Activated T-helper 2 cell treated with anti-CD3 and anti-CD28 coated beads, Interferon-gamma antibody, Interleukin-2, Interleukin-4, amounts not matched to agents 10 μg/mL and 5 μg/mL and 100 μg/mL, durations not matched to agents 14 hours and 24 hours and 36 hours (primary cell): ENCODE measurements at regions of chr22 and their contacts with region 1.

Region 1: GRCh38 chr22:36387752-36388518 is at the start of gene MYH9:
- DNase-seq: peak; percentile 100
- H3K4me3 Mint-ChIP-seq: peak within 1 kb of the TSS; percentile 98
- H3K27ac Mint-ChIP-seq: peak within 1 kb of the TSS; percentile 98
- H3K4me1 Mint-ChIP-seq: peaks cover 36% of the 10 kb centered on the region
- H3K27me3 Mint-ChIP-seq: no peaks in the 10 kb centered on the region
- total RNA-seq, gene MYH9: 619 and 645 TPM in 2 replicates

Region 2: DNA sequence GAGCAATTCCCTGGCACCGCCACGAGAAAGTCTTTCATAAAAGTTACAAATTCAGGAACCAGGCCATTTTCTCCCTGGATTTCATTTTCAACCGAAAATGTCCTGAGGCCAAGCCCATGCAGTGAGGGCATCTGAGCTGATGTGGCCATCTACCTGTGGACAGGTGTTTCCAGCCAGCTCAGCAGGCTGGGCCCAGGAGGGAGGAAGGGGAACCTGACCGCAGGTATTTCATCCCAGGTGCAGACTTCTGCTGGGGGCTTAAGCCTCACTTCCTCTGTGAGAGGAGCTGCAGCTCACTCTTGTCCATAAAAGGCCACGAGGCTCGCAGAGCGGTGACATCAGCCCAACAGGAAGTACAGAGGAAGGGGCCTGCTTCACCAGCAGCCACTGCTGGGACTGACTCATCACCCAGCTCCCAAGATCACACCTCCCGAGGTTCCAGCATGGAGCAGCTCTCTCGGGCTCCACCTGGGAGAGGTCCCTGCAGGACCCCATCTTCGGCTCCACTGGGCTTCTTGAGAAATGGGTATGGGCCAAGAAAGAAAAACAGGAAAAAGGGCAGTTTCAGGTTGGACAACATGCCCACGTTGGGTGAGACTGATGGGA is 56.5 kb before region 1 on chr22:
- intact Hi-C with region 1: loop called (anchors 1 kb)
- DNase-seq: peak; percentile 80
- H3K4me3 Mint-ChIP-seq: peak overlapping the region; percentile 90
- H3K27ac Mint-ChIP-seq: peak overlapping the region; percentile 99
- H3K4me1 Mint-ChIP-seq: peaks cover 88% of the 10 kb centered on the region
- H3K27me3 Mint-ChIP-seq: no peaks in the 10 kb centered on the region

Region 3: GRCh38 chr22:36365020-36365411 is 22.9 kb before region 1 on chr22:
- intact Hi-C with region 1: loop called (anchors 2 kb)
- DNase-seq: peak; percentile 80
- H3K4me3 Mint-ChIP-seq: peak overlapping the region; percentile 44
- H3K27ac Mint-ChIP-seq: peak overlapping the region; percentile 93
- H3K4me1 Mint-ChIP-seq: peaks cover 80% of the 10 kb centered on the region
- H3K27me3 Mint-ChIP-seq: no peaks in the 10 kb centered on the region

Region 4: GRCh38 chr22:36377022-36377631 is 10.8 kb before region 1 on chr22:
- intact Hi-C with region 1: loop called (anchors 1 kb)
- DNase-seq: peak; percentile 48
- H3K4me3 Mint-ChIP-seq: peak overlapping the region; percentile 81
- H3K27ac Mint-ChIP-seq: peak overlapping the region; percentile 97
- H3K4me1 Mint-ChIP-seq: peaks cover 85% of the 10 kb centered on the region
- H3K27me3 Mint-ChIP-seq: no peaks in the 10 kb centered on the region

Region 5: DNA sequence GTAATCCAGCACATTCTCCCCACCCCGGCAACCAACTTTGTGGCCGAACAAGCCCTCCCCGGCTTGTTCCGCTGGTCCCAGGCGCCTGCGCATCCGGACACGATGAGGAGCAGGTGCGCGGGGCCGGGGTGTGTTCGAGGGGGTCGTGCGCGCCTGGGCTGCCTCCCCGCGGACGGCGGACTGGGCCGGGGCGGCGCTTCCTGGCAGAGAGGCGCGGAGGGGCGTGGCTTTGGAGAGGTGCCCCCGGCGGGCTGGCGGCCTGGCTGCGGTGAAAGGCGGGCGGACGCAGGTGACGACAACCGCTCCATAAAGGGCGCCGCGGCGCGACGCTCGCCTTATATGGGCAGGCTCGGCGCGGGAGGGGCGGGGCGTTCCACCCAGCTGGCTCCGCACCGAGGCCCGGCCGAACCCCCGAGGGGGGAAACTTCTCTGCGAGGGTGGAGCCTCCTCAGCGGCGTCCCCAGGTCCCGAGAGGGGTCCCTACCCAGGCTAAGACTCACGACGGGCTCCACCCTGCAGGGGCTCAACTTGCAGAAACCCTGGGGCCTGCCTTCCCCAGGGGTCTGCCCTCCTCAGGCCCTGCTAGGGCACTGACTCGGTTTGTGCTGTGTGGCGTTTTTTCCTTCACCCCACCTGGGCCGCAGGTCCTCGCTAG is 67.1 kb after region 1 on chr22:
- intact Hi-C with region 1: loop called (anchors 1 kb)
- DNase-seq: peak; percentile 95
- H3K4me3 Mint-ChIP-seq: peak overlapping the region; percentile 69
- H3K27ac Mint-ChIP-seq: peak overlapping the region; percentile 60
- H3K4me1 Mint-ChIP-seq: peaks cover 35% of the 10 kb centered on the region
- H3K27me3 Mint-ChIP-seq: no peaks in the 10 kb centered on the region

Region 6: DNA sequence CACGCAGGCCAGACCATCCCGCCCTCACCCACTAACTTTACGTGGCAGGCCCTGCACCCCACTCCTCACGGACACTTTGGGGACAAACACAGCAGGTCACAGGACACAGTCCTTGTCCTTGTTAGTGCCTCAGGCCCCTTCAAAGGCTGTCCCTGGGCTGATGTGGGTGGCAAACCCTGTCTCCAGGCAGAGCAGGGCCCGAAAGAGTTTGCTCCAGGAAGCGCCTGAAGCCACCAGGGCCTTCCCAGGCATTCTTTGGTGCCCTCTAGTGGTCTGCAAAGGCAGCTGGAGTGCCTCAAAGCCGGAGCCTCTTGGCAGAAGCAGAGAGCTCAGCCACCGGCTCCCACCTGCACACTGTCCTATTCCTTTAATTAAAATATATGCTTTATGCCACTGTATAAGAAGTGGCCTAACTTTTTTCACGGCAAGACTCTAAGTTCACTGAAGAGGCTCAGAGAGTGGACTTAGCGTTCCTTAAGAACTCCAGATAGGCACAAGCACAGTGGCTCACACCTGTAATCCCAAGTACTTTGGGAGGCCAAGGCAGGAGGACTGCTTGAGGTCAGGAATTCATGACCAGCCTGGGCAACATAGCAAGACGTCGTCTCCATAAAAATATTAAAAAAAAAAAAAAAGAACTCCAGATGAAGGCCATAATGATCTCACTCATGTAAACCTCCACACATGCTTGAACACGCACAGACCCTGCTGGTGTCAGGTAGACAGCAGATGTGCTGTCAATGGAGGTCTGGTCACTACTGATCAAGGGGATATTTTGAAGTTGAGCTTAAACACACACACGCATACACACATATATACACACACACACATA is 82.4 kb after region 1 on chr22:
- intact Hi-C with region 1: loop called (anchors 5 kb)
- DNase-seq: peak; percentile 76
- H3K4me3 Mint-ChIP-seq: no peak overlapping the region
- H3K27ac Mint-ChIP-seq: peak overlapping the region; percentile 65
- H3K4me1 Mint-ChIP-seq: peaks cover 26% of the 10 kb centered on the region
- H3K27me3 Mint-ChIP-seq: no peaks in the 10 kb centered on the region